ENCODE measurements at regions of chr13 and their contacts with region 1.

Region 1: GRCh38 chr13:37158481-37158880 is 53.0 kb upstream of the CSNK1A1L start:
- DNase-seq: no peak
- H3K4me3 ChIP-seq: no peak overlapping the region
- H3K27ac ChIP-seq: no peak overlapping the region
- H3K4me1 ChIP-seq: no peaks in the 10 kb centered on the region
- H3K27me3 ChIP-seq: no peaks in the 10 kb centered on the region
- CTCF ChIP-seq: no peak
- POLR2A ChIP-seq: no peak

Region 2: DNA sequence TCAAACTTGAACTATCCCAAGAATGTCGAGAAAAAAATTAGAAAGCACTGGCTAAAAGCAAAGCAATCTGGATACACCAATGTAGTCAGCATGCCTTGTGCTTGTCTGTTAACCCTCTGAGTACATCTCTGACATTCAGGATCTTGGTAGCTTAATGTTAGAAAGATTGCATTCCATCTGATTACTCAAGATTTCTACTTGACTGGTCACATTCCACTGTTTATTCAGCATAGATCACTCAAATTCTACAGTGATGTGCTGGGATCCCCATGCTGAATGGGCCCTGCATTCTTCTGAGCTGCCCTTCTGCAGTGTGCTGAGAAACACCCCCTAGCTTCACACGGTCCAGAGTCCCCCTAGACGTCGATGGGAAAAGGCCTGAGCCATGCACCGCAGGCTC is 1386.6 kb before region 1 on chr13:
- intact Hi-C with region 1: loop called (anchors 10 kb)
- DNase-seq: no peak
- H3K4me3 ChIP-seq: no peak overlapping the region
- H3K27ac ChIP-seq: no peak overlapping the region
- H3K4me1 ChIP-seq: no peaks in the 10 kb centered on the region
- H3K27me3 ChIP-seq: no peaks in the 10 kb centered on the region
- CTCF ChIP-seq: no peak
- POLR2A ChIP-seq: no peak

Measured in breast epithelium (tissue), 4 donors.